CD4-positive, alpha-beta memory T cell (primary cell): ENCODE measurements at regions of chr11 and their contacts with region 1.

Region 1: GRCh38 chr11:123054301-123055065 is 7.5 kb downstream of the HSPA8 start:
- DNase-seq: peak; percentile 65 to 72 (median 69)
- H3K4me3 ChIP-seq: no peak overlapping the region
- H3K4me3 Mint-ChIP-seq: peak overlapping the region in 6 of 8 donors; percentile 52 to 100 (median 86)
- H3K27ac ChIP-seq: no peak overlapping the region
- H3K27ac Mint-ChIP-seq: peak overlapping the region; percentile 61 to 97 (median 87)
- H3K4me1 ChIP-seq: peaks cover 56% of the 10 kb centered on the region
- H3K4me1 Mint-ChIP-seq: peaks cover 46 to 62% (median 51%) of the 10 kb centered on the region in 4 donors
- H3K27me3 ChIP-seq: no peaks in the 10 kb centered on the region
- H3K27me3 Mint-ChIP-seq: no peaks in the 10 kb centered on the region

Region 2: DNA sequence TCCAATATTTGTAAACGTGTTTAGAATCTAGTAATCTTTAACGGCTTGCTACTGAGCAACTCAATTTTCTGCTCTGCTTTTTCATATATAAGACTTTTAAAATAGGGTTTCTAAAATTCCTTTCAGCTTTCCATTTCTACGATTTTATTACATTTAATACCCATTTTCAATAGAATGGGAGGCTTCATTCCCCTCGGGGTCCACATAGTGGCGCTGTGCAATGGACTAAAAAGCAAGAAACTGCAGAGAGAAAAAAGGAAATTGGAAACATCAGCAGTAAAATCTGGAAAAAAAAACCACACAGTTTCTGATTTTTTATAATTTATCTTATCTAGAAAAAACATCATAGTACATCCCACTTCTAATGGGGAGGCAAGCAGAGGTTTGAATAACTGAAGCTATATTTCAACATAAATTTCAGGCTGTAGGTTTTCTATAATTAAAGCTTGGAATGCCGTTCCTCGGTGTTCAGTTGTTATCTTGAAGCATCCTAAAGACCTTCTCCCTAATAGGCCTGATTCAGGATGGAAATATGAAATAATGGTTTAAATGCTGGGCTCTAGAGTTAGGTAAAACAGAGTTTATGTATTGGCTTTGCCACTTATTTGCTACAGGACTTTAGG is 190.7 kb before region 1 on chr11:
- CTCF ChIA-PET with region 1: interaction called, 38 read pairs
- POLR2A ChIA-PET with region 1: interaction called, 7 read pairs
- intact Hi-C with region 1: loop called (anchors 1 kb)
- DNase-seq: peak; percentile 24 to 49 (median 37)
- H3K4me3 ChIP-seq: no peak overlapping the region
- H3K4me3 Mint-ChIP-seq: no peak overlapping the region
- H3K27ac ChIP-seq: no peak overlapping the region
- H3K27ac Mint-ChIP-seq: no peak overlapping the region
- H3K4me1 ChIP-seq: no peaks in the 10 kb centered on the region
- H3K4me1 Mint-ChIP-seq: no peaks in the 10 kb centered on the region
- H3K27me3 ChIP-seq: no peaks in the 10 kb centered on the region
- H3K27me3 Mint-ChIP-seq: peaks cover 19 to 28% of the 10 kb centered on the region in 2 donors

Region 3: GRCh38 chr11:123033895-123034294 is 20.6 kb before region 1 on chr11:
- CTCF ChIA-PET with region 1: interaction called, 31 read pairs
- POLR2A ChIA-PET with region 1: interaction called, 3 read pairs
- intact Hi-C with region 1: no loop called
- DNase-seq: no peak
- H3K4me3 ChIP-seq: no peak overlapping the region
- H3K4me3 Mint-ChIP-seq: no peak overlapping the region
- H3K27ac ChIP-seq: no peak overlapping the region
- H3K27ac Mint-ChIP-seq: no peak overlapping the region
- H3K4me1 ChIP-seq: no peaks in the 10 kb centered on the region
- H3K4me1 Mint-ChIP-seq: peaks cover 0 to 2% (median 0%) of the 10 kb centered on the region in 4 donors
- H3K27me3 ChIP-seq: no peaks in the 10 kb centered on the region
- H3K27me3 Mint-ChIP-seq: peaks cover 2 to 3% of the 10 kb centered on the region in 2 donors

Region 4: GRCh38 chr11:123083623-123084029 is 29.1 kb after region 1 on chr11:
- CTCF ChIA-PET with region 1: interaction called, 184 read pairs
- POLR2A ChIA-PET with region 1: interaction called, 891 read pairs
- intact Hi-C with region 1: no loop called
- DNase-seq: peak; percentile 56 to 91 (median 72)
- H3K4me3 ChIP-seq: peak overlapping the region in 1 of 2 donors; percentile 3
- H3K4me3 Mint-ChIP-seq: peak overlapping the region; percentile 73 to 88 (median 78)
- H3K27ac ChIP-seq: peak overlapping the region; percentile 45
- H3K27ac Mint-ChIP-seq: peak overlapping the region; percentile 93 to 96 (median 93)
- H3K4me1 ChIP-seq: peaks cover 57% of the 10 kb centered on the region
- H3K4me1 Mint-ChIP-seq: peaks cover 31 to 66% (median 50%) of the 10 kb centered on the region in 4 donors
- H3K27me3 ChIP-seq: no peaks in the 10 kb centered on the region
- H3K27me3 Mint-ChIP-seq: no peaks in the 10 kb centered on the region

Region 5: GRCh38 chr11:123093739-123094138 is 39.3 kb after region 1 on chr11:
- CTCF ChIA-PET with region 1: interaction called, 184 read pairs
- POLR2A ChIA-PET with region 1: interaction called, 891 read pairs
- intact Hi-C with region 1: no loop called
- DNase-seq: no peak
- H3K4me3 ChIP-seq: no peak overlapping the region
- H3K4me3 Mint-ChIP-seq: no peak overlapping the region
- H3K27ac ChIP-seq: no peak overlapping the region
- H3K27ac Mint-ChIP-seq: no peak overlapping the region
- H3K4me1 ChIP-seq: peaks cover 6% of the 10 kb centered on the region
- H3K4me1 Mint-ChIP-seq: peaks cover 9 to 25% (median 16%) of the 10 kb centered on the region in 4 donors
- H3K27me3 ChIP-seq: no peaks in the 10 kb centered on the region
- H3K27me3 Mint-ChIP-seq: no peaks in the 10 kb centered on the region

Region 6: DNA sequence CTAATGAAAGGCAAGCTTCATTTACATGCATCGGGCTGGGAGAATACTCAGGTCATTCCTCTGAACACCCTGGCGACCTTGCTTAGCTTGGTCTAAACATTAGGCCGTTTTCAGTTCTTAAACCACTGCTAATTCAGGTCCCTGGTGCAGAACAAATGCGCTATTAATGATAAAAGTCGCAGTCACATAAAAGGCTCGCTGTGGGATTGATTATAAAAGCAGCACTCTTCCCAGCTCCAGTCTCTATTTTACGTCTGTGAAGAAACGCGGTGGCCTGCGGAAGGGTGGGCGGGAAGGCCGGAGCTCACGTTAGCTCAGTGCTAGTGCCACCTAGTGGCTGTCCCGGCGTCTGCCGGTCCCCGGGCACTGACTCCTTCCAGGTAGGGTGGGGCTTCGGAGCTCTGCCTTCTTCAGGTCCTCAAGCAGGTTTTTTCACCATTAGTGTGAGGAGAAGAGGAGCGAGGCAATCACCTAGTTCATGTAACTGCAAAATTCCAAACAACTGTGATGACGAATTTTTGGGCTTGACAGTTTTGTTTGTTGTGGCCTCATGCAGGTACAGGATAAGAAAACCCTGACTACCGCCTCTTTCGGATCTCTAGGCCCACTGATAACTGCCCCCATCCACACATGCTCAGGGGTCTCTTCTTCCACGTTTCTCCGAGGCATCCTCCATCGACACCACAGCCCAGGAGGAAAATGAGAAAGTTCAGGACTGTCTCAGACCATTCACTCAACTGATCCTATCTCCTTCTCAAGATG is 207.0 kb after region 1 on chr11:
- CTCF ChIA-PET with region 1: interaction called, 13 read pairs
- POLR2A ChIA-PET with region 1: interaction called, 3 read pairs
- intact Hi-C with region 1: no loop called
- DNase-seq: peak in 4 of 5 donors; percentile 28 to 38 (median 35)
- H3K4me3 ChIP-seq: no peak overlapping the region
- H3K4me3 Mint-ChIP-seq: peak overlapping the region in 5 of 8 donors; percentile 32 to 71 (median 49)
- H3K27ac ChIP-seq: no peak overlapping the region
- H3K27ac Mint-ChIP-seq: peak overlapping the region in 2 of 7 donors; percentile 4 to 59
- H3K4me1 ChIP-seq: peaks cover 7% of the 10 kb centered on the region
- H3K4me1 Mint-ChIP-seq: peaks cover 2 to 9% (median 7%) of the 10 kb centered on the region in 4 donors
- H3K27me3 ChIP-seq: peaks cover 4% of the 10 kb centered on the region
- H3K27me3 Mint-ChIP-seq: peaks cover 19 to 27% of the 10 kb centered on the region in 2 donors

Region 7: GRCh38 chr11:124807660-124808270 is 1753.3 kb after region 1 on chr11:
- CTCF ChIA-PET with region 1: no interaction called
- POLR2A ChIA-PET with region 1: no interaction called
- intact Hi-C with region 1: no loop called
- DNase-seq: no peak
- H3K4me3 ChIP-seq: no peak overlapping the region
- H3K4me3 Mint-ChIP-seq: no peak overlapping the region
- H3K27ac ChIP-seq: no peak overlapping the region
- H3K27ac Mint-ChIP-seq: no peak overlapping the region
- H3K4me1 ChIP-seq: no peaks in the 10 kb centered on the region
- H3K4me1 Mint-ChIP-seq: no peaks in the 10 kb centered on the region
- H3K27me3 ChIP-seq: no peaks in the 10 kb centered on the region
- H3K27me3 Mint-ChIP-seq: peaks cover 8 to 11% of the 10 kb centered on the region in 2 donors